ENCODE measurements at regions of chr1 and their contacts with region 1.

Region 1: GRCh38 chr1:183635606-183636333 is at the start of gene ARPC5:
- DNase-seq: peak; percentile 97
- H3K4me3 Mint-ChIP-seq: peak within 1 kb of the TSS; percentile 98
- H3K27ac Mint-ChIP-seq: peak within 1 kb of the TSS; percentile 99
- H3K4me1 Mint-ChIP-seq: peaks cover 27% of the 10 kb centered on the region
- H3K27me3 Mint-ChIP-seq: no peaks in the 10 kb centered on the region
- total RNA-seq, gene ARPC5: 162 to 164 TPM

Region 2: DNA sequence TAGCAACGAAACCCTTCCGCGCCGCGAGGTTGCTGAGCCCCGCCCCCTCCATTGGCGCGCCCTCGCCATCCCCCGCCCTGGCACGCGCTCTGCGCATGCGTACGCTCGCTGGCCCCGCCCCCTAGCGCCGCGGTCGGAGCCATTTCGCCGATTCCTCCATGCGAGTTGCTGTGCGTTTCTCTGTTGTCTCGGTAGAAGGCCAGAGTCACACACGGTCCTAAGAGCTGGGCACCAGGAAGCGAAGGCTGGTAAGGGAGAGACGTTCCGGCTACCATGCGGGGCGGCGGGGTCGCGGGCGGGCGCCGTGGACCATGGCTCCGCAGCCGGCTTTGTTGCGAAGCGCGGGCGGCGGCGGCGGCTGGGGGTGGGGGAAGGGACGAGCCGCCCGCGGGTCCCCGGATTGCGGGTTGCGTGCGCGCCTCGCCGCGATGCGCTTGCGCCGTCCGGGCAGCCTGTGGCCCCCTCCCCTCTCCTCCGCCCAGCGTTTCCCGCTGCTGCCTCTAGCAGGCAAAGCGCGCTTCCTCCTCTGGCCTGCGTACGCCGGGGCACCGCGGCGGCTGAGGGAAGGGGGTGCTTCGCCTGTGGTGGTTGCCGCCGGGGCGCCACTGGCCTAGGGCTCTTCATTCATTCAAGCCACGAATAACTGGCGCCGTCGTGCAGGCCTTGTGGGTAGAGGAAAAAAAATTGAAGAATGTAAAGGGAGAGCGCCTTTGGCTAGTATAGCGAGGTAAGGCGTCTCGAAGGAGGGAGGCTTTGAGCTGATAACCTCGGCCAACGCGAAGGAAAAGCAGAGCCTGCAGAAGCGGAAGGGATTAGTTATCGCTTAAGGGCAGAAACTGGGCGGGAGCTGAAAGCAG is 796.3 kb before region 1 on chr1 and contains the start of gene DHX9:
- CTCF ChIA-PET with region 1: no interaction called
- intact Hi-C with region 1: loop called (anchors 2 kb)
- DNase-seq: peak; percentile 94
- H3K4me3 Mint-ChIP-seq: peak within 1 kb of the TSS; percentile 90
- H3K27ac Mint-ChIP-seq: peak within 1 kb of the TSS; percentile 95
- H3K4me1 Mint-ChIP-seq: peaks cover 44% of the 10 kb centered on the region
- H3K27me3 Mint-ChIP-seq: no peaks in the 10 kb centered on the region
- total RNA-seq, gene DHX9: 194 TPM

Region 3: GRCh38 chr1:183655562-183656075 is 19.8 kb after region 1 on chr1:
- CTCF ChIA-PET with region 1: interaction called, 43 read pairs
- intact Hi-C with region 1: loop called (anchors 1 kb)
- DNase-seq: peak; percentile 87
- H3K4me3 Mint-ChIP-seq: peak overlapping the region; percentile 13
- H3K27ac Mint-ChIP-seq: no peak overlapping the region
- H3K4me1 Mint-ChIP-seq: peaks cover 40% of the 10 kb centered on the region
- H3K27me3 Mint-ChIP-seq: no peaks in the 10 kb centered on the region

Region 4: GRCh38 chr1:183896466-183897048 is 260.8 kb after region 1 on chr1:
- CTCF ChIA-PET with region 1: no interaction called
- intact Hi-C with region 1: loop called (anchors 2 kb)
- DNase-seq: no peak
- H3K4me3 Mint-ChIP-seq: no peak overlapping the region
- H3K27ac Mint-ChIP-seq: no peak overlapping the region
- H3K4me1 Mint-ChIP-seq: peaks cover 13% of the 10 kb centered on the region
- H3K27me3 Mint-ChIP-seq: no peaks in the 10 kb centered on the region

Region 5: GRCh38 chr1:184036517-184036949 is 400.8 kb after region 1 on chr1:
- CTCF ChIA-PET with region 1: no interaction called
- intact Hi-C with region 1: loop called (anchors 1 kb)
- DNase-seq: peak; percentile 23
- H3K4me3 Mint-ChIP-seq: peak overlapping the region; percentile 58
- H3K27ac Mint-ChIP-seq: no peak overlapping the region
- H3K4me1 Mint-ChIP-seq: peaks cover 15% of the 10 kb centered on the region
- H3K27me3 Mint-ChIP-seq: peaks cover 68% of the 10 kb centered on the region

Region 6: GRCh38 chr1:184061396-184062003 is 425.7 kb after region 1 on chr1:
- CTCF ChIA-PET with region 1: no interaction called
- intact Hi-C with region 1: no loop called
- DNase-seq: no peak
- H3K4me3 Mint-ChIP-seq: no peak overlapping the region
- H3K27ac Mint-ChIP-seq: no peak overlapping the region
- H3K4me1 Mint-ChIP-seq: peaks cover 17% of the 10 kb centered on the region
- H3K27me3 Mint-ChIP-seq: no peaks in the 10 kb centered on the region

Region 7: GRCh38 chr1:184754476-184755225 is 1118.9 kb after region 1 on chr1 and contains the start of gene EDEM3:
- CTCF ChIA-PET with region 1: no interaction called
- intact Hi-C with region 1: loop called (anchors 2 kb)
- DNase-seq: peak; percentile 98
- H3K4me3 Mint-ChIP-seq: peak within 1 kb of the TSS; percentile 88
- H3K27ac Mint-ChIP-seq: peak within 1 kb of the TSS; percentile 88
- H3K4me1 Mint-ChIP-seq: peaks cover 36% of the 10 kb centered on the region
- H3K27me3 Mint-ChIP-seq: no peaks in the 10 kb centered on the region
- total RNA-seq, gene EDEM3: 9.9 to 10.5 TPM